H1 (cell line): ENCODE measurements at regions of chr12 and their contacts with region 1.

Region 1: DNA sequence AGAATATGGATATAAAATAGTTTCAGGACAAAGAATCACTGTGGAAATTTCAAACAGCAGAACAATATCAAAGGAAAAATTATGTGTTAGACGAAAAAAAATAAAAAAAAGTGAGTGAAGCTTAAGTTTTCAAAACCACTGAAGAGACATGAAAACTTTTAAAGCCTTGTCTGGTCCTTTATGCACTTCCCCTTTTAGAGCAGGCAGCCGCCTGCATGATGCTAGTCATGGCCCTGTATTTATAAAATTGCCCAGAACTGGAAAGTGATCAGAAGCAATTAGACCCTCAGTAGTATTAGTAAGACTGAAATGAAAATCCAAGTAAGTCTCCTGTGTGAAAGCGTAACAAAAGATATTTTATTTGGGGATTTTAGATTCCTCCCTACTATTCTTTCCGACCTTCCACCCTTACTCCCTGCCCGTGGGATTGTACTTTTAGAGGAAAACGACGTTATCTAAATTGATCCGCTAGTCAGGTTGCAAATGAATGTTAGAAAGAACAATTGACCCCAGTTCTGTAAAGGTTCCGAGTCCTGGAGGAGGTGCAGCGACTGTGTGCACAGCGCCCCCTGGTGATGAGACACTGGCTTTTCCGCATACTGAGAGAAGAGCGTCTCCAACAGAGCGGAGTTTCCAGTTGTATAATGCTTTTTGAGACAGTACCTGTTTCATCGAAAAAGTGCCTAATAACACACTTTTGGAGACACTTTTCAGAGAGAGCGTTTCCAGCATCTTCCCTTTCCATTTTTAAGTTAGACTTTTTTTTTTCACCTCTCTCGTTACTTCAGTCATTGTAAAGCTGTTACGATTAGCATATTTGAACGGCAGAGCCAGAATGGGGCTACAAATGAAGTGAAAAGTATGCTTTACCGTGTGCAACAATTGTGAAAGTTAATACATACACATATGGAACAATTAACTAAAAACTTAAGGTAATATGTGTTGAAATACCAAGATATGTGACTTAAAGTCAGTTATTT is 12.4 kb downstream of the MGST1 start:
- DNase-seq: peak; percentile 41 to 85
- H3K4me3 ChIP-seq: no peak overlapping the region
- H3K27ac ChIP-seq: no peak overlapping the region
- H3K4me1 ChIP-seq: no peaks in the 10 kb centered on the region
- H3K27me3 ChIP-seq: peaks cover 0 to 1% (median 0%) of the 10 kb centered on the region in 4 experiments; a peak in 1 of 7 replicates
- CTCF ChIP-seq: peak; percentile 78 to 96 (median 89)
- EP300 ChIP-seq: no peak
- POLR2A ChIP-seq: no peak; a peak in 1 of 3 replicates
- RAD21 ChIP-seq: peak; percentile 86 to 87

Region 2: GRCh38 chr12:16076553-16076952 is 283.2 kb before region 1 on chr12:
- CTCF ChIA-PET with region 1: interaction called, 12 read pairs
- POLR2A ChIA-PET with region 1: interaction called, 3 read pairs
- DNase-seq: no peak
- H3K4me3 ChIP-seq: no peak overlapping the region
- H3K27ac ChIP-seq: no peak overlapping the region
- H3K4me1 ChIP-seq: no peaks in the 10 kb centered on the region
- H3K27me3 ChIP-seq: no peaks in the 10 kb centered on the region
- CTCF ChIP-seq: peak in 2 of 3 experiments; percentile 63 to 90; a peak in 3 of 4 replicates
- EP300 ChIP-seq: no peak
- POLR2A ChIP-seq: no peak
- RAD21 ChIP-seq: peak; percentile 94 to 95

Region 3: GRCh38 chr12:16165506-16165905 is 194.3 kb before region 1 on chr12:
- CTCF ChIA-PET with region 1: interaction called, 53 read pairs
- POLR2A ChIA-PET with region 1: interaction called, 3 read pairs
- DNase-seq: peak in 1 of 2 experiments; percentile 5
- H3K4me3 ChIP-seq: no peak overlapping the region
- H3K27ac ChIP-seq: no peak overlapping the region
- H3K4me1 ChIP-seq: no peaks in the 10 kb centered on the region
- H3K27me3 ChIP-seq: no peaks in the 10 kb centered on the region
- CTCF ChIP-seq: peak in 2 of 3 experiments; percentile 69 to 70; a peak in 3 of 4 replicates
- EP300 ChIP-seq: no peak
- POLR2A ChIP-seq: no peak
- RAD21 ChIP-seq: peak; percentile 97 to 98

Region 4: DNA sequence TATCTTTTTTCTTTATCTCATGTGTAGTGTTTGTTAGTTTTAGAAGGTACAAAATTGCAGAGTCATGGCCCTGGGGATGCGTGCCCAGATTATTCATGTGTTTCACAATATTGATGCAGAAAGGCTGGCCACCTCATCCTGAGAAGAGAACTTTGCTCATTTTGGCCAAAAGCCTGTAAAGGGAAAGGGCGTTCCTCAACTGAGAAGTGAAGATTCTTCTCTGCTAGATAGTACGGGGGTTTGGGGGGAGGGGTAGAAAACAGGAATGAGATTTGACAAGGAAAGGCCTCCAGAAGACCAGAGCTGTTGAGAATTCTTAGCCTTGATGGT is 10.7 kb before region 1 on chr12:
- CTCF ChIA-PET with region 1: interaction called, 21 read pairs
- POLR2A ChIA-PET with region 1: interaction called, 7 read pairs
- DNase-seq: no peak
- H3K4me3 ChIP-seq: peak overlapping the region; percentile 72 to 97 (median 90)
- H3K27ac ChIP-seq: peak overlapping the region; percentile 25; the same call in 1 of the 2 replicates
- H3K4me1 ChIP-seq: peaks cover 2 to 7% (median 7%) of the 10 kb centered on the region in 4 experiments; a peak in 5 of 7 replicates
- H3K27me3 ChIP-seq: no peaks in the 10 kb centered on the region
- CTCF ChIP-seq: no peak
- EP300 ChIP-seq: no peak
- POLR2A ChIP-seq: no peak
- RAD21 ChIP-seq: no peak